ENCODE measurements at regions of chr7 and their contacts with region 1.

Region 1: DNA sequence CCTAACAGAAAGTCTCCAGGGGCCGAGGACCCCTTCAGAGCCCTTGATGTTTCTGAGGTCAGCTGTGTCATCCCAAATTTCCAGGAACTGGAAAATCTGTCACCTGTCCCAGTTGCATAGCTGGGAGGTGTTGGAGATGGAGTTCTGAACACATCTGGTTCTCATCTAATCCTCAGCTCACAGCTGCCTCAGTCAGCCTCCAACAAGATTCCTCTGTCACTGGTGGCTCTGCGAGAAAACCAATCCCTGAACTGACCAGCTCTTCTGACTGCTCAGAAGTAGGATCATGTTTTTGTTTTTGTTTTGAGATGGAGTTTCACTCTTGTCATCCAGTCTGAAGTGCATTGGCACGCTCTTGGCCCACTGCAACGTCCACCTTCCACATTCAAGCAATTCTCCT is 37.6 kb upstream of the MYL10 start:
- DNase-seq: no peak
- H3K4me3 ChIP-seq: no peak overlapping the region
- H3K27ac ChIP-seq: no peak overlapping the region
- H3K4me1 ChIP-seq: no peaks in the 10 kb centered on the region
- H3K27me3 ChIP-seq: peaks cover 0 to 10% of the 10 kb centered on the region in 2 donors
- CTCF ChIP-seq: no peak
- POLR2A ChIP-seq: no peak

Region 2: GRCh38 chr7:100586266-100587025 is 1080.3 kb before region 1 on chr7 and contains the start of gene FBXO24:
- intact Hi-C with region 1: no loop called
- DNase-seq: peak; percentile 100
- H3K4me3 ChIP-seq: peak within 1 kb of the TSS; percentile 91 to 97 (median 95)
- H3K27ac ChIP-seq: peak within 1 kb of the TSS; percentile 98 to 99
- H3K4me1 ChIP-seq: peaks cover 5 to 23% of the 10 kb centered on the region in 2 donors
- H3K27me3 ChIP-seq: no peaks in the 10 kb centered on the region
- CTCF ChIP-seq: no peak
- POLR2A ChIP-seq: no peak
- total RNA-seq, gene FBXO24: 0.59 to 0.98 TPM in 2 of 3 donors, not detected in the other

Region 3: DNA sequence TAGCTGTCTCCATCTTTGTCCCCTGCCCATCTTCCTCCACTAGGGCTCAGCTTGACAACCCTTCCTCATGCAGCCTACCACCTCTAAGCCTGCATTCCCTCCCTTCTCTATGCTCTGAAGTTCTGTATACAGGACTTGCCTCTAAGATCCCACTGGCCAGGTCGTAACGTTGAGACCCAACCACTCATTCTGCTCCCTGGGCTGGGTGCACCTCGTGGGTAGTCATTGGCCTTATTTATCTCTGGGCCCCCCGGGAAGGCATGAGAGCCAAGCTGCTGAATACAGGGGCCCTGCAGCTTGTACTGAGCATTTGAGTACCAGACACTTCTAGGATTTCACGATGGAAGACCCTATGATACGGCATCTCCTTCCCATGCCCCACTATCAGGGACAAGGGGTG is 68.8 kb before region 1 on chr7:
- intact Hi-C with region 1: loop called (anchors 2 kb)
- DNase-seq: no peak
- H3K4me3 ChIP-seq: no peak overlapping the region
- H3K27ac ChIP-seq: no peak overlapping the region
- H3K4me1 ChIP-seq: no peaks in the 10 kb centered on the region
- H3K27me3 ChIP-seq: peaks cover 0 to 41% of the 10 kb centered on the region in 2 donors
- CTCF ChIP-seq: no peak
- POLR2A ChIP-seq: no peak